ENCODE measurements at regions of chr17 and their contacts with region 1.

Region 1: DNA sequence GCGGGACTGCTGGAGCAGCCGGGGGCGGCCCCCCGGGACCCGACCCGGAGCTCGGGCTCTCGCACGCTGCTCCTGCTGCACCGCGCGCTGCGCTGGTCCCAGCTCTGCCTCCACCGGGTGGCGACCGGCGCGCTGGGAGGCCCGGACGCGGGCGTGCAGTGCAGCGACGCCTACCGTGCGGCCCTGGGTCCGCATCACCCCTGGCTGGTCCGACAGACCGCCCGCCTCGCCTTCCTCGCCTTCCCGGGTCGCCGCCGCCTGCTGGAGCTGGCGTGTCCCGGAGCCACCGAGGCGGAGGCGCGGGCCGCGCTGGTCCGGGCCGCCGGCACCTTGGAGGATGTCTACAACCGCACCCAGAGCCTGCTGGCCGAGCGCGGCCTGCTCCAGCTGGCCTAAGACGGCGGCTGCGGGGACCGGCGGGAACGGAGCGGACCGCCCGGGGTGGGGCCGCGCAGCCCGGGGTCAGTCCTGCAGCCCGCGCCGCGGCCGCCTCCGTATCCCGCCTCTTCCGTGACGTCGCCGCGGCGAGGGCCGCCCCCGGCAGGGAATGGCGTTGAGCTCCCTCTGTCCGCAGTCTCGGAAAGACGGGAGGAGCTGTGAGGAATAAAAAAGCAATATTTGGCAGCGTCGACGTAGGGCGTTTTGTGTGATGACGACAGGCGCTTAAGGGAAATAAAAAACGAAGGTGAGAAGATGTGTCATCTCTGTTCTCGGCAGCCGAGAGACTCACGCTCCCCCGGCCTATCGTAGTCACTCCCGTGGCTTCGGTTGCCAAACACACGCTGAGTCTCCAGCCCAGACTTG is 1.3 kb downstream of the GLTPD2 start:
- DNase-seq: peak; percentile 97
- H3K4me3 ChIP-seq: peak overlapping the region; percentile 57 to 81 (median 68)
- H3K27ac ChIP-seq: peak overlapping the region; percentile 92 to 97 (median 94)
- H3K4me1 ChIP-seq: peaks cover 23 to 59% (median 48%) of the 10 kb centered on the region in 6 donors
- H3K27me3 ChIP-seq: peaks cover 0 to 47% (median 23%) of the 10 kb centered on the region in 7 donors
- CTCF ChIP-seq: peak; percentile 44 to 95 (median 90)
- POLR2A ChIP-seq: peak in 2 of 3 donors; percentile 19 to 76

Region 2: GRCh38 chr17:4607773-4608187 is 182.3 kb before region 1 on chr17:
- intact Hi-C with region 1: no loop called
- DNase-seq: no peak
- H3K4me3 ChIP-seq: no peak overlapping the region
- H3K27ac ChIP-seq: peak overlapping the region; percentile 18 to 75 (median 58)
- H3K4me1 ChIP-seq: peaks cover 0 to 36% (median 15%) of the 10 kb centered on the region in 6 donors
- H3K27me3 ChIP-seq: peaks cover 0 to 8% (median 0%) of the 10 kb centered on the region in 7 donors
- CTCF ChIP-seq: no peak
- POLR2A ChIP-seq: no peak

Region 3: GRCh38 chr17:4696437-4696805 is 93.7 kb before region 1 on chr17:
- intact Hi-C with region 1: no loop called
- DNase-seq: no peak
- H3K4me3 ChIP-seq: peak overlapping the region in 2 of 8 donors; percentile 2 to 27
- H3K27ac ChIP-seq: peak overlapping the region in 7 of 8 donors; percentile 47 to 74 (median 61)
- H3K4me1 ChIP-seq: peaks cover 0 to 28% (median 14%) of the 10 kb centered on the region in 6 donors
- H3K27me3 ChIP-seq: no peaks in the 10 kb centered on the region
- CTCF ChIP-seq: no peak
- POLR2A ChIP-seq: no peak

Region 4: GRCh38 chr17:4709794-4710692 is 80.1 kb before region 1 on chr17 and contains the start of gene ARRB2:
- intact Hi-C with region 1: loop called (anchors 10 kb)
- DNase-seq: peak; percentile 100
- H3K4me3 ChIP-seq: peak within 1 kb of the TSS; percentile 50 to 93 (median 70)
- H3K27ac ChIP-seq: peak within 1 kb of the TSS; percentile 85 to 99 (median 95)
- H3K4me1 ChIP-seq: peaks cover 22 to 59% (median 46%) of the 10 kb centered on the region in 6 donors
- H3K27me3 ChIP-seq: no peaks in the 10 kb centered on the region
- CTCF ChIP-seq: peak; percentile 49 to 91 (median 80)
- POLR2A ChIP-seq: peak in 2 of 3 donors; percentile 42 to 78
- total RNA-seq, gene ARRB2: 117 to 416 (median 226) TPM

Region 5: GRCh38 chr17:4739122-4740024 is 50.7 kb before region 1 on chr17 and contains the starts of genes CXCL16 and ZMYND15:
- intact Hi-C with region 1: loop called (anchors 10 kb)
- DNase-seq: peak; percentile 95
- H3K4me3 ChIP-seq: peak within 1 kb of the TSS; percentile 60 to 91 (median 80)
- H3K27ac ChIP-seq: peak within 1 kb of the TSS in 7 of 8 donors; percentile 52 to 87 (median 78)
- H3K4me1 ChIP-seq: peaks cover 5 to 63% (median 32%) of the 10 kb centered on the region in 6 donors
- H3K27me3 ChIP-seq: peaks cover 0 to 45% (median 0%) of the 10 kb centered on the region in 7 donors
- CTCF ChIP-seq: no peak
- POLR2A ChIP-seq: no peak
- total RNA-seq, gene CXCL16: 45.5 to 104 (median 70.5) TPM
- total RNA-seq, gene ZMYND15: 3.8 to 11.5 (median 5.2) TPM

Region 6: DNA sequence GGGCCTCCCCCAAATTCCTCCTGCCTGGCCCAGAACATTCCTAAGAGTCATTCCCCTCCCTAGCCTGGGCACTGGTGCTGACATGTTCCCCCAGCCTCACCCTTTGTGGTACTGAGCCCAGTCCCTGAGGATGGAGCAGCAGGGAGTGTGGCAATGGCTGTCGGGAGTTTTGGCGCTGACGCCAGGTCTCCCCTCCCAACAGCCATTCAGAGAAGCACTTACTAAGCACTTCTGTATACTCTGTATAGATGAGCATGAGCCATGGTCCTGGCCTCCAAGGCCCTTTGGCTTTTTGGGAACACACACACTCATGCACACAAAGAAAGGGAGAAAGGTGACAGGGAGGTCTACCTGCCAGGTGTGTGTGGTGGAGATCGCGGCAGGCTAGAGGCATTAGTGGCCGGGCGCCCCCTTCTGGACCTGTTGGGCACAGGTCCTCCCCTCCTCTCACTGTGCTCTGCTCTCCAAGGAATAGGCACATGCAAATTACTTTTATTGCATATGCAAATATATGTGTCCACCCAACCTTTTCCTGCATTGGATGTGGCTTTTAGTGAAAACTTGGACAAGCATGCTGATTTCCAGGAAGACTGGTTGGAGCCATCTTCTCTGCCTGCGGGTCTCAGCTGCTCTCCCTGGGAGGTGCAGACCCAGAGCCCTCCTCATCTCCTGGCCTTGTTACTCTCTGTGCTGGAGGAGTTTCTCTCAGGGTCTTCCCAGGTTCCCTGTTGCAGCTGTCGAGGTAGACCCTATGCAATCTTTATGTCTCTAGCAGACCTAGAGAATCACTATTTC is 91.9 kb after region 1 on chr17:
- intact Hi-C with region 1: loop called (anchors 5 kb)
- DNase-seq: peak; percentile 90
- H3K4me3 ChIP-seq: no peak overlapping the region
- H3K27ac ChIP-seq: no peak overlapping the region
- H3K4me1 ChIP-seq: peaks cover 0 to 29% (median 8%) of the 10 kb centered on the region in 6 donors
- H3K27me3 ChIP-seq: no peaks in the 10 kb centered on the region
- CTCF ChIP-seq: peak; percentile 66 to 90 (median 79)
- POLR2A ChIP-seq: no peak

Measured in spleen (tissue), 13 donors.